Prostate gland (tissue), 2 donors: ENCODE measurements at regions of chr2 and their contacts with region 1.

Region 1: GRCh38 chr2:95345566-95346230 is 48.6 kb downstream of the KCNIP3 start:
- DNase-seq: peak; percentile 77
- H3K4me3 ChIP-seq: peak overlapping the region; percentile 44 to 57
- H3K27ac ChIP-seq: peak overlapping the region; percentile 60 to 77
- H3K4me1 ChIP-seq: peaks cover 2% of the 10 kb centered on the region
- H3K27me3 ChIP-seq: no peaks in the 10 kb centered on the region
- CTCF ChIP-seq: peak; percentile 43 to 92 (median 78)
- POLR2A ChIP-seq: no peak

Region 2: GRCh38 chr2:95179451-95179850 is 166.2 kb before region 1 on chr2:
- intact Hi-C with region 1: no loop called
- DNase-seq: no peak
- H3K4me3 ChIP-seq: no peak overlapping the region
- H3K27ac ChIP-seq: no peak overlapping the region
- H3K4me1 ChIP-seq: no peaks in the 10 kb centered on the region
- H3K27me3 ChIP-seq: no peaks in the 10 kb centered on the region
- CTCF ChIP-seq: no peak
- POLR2A ChIP-seq: no peak

Region 3: GRCh38 chr2:95207111-95207961 is 138.4 kb before region 1 on chr2 and contains the start of gene ZNF892:
- intact Hi-C with region 1: loop called (anchors 10 kb)
- DNase-seq: peak; percentile 92
- H3K4me3 ChIP-seq: peak within 1 kb of the TSS; percentile 53 to 56
- H3K27ac ChIP-seq: peak within 1 kb of the TSS; percentile 74 to 80
- H3K4me1 ChIP-seq: no peaks in the 10 kb centered on the region
- H3K27me3 ChIP-seq: no peaks in the 10 kb centered on the region
- CTCF ChIP-seq: peak in 3 of 4 experiments; percentile 38 to 57 (median 46)
- POLR2A ChIP-seq: peak; percentile 34
- total RNA-seq, gene ZNF892: 4.6 to 4.8 TPM

Region 4: DNA sequence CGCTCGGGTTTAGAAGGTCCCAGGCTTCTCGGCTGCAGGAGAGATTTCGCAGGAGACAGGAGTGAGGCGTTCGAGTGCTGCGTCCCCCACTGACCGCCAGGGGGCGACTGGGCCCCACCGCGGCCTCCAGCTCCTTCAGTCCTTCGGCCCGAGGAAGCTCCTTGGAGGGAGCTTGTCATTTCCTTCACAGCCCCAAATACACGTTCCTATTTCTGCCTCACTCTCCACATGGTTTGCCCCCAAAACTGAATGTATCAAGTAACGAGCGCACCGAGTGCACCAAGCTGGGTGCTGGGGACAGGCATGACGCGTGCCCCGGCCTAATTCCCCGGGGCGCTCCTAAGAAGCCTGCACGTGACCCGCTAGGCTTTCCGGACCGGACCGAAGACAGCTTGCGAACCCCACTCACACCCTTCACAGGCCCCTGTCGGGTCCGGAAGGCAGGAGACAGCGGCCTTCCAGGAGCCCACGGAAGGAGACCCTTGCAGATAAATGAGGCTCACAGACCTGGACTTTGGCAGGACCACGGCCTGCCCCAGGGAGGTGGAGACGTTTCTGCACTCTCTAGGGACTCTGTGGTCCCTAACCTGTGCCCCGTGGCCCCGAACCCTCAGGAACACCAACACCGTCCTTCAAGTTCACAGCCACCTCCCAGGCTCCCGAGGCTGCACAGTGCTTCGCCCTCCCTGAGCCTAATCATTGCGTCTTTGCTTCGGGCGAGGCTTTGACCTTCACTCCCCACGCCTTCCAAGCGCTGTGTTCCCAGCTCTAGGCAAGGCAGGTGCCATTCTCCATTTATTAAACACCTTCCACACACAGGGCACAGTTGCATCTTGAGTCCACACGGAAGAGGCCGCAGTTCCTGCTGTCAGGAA is 43.8 kb after region 1 on chr2:
- intact Hi-C with region 1: loop called (anchors 5 kb)
- DNase-seq: no peak
- H3K4me3 ChIP-seq: no peak overlapping the region
- H3K27ac ChIP-seq: no peak overlapping the region
- H3K4me1 ChIP-seq: no peaks in the 10 kb centered on the region
- H3K27me3 ChIP-seq: no peaks in the 10 kb centered on the region
- CTCF ChIP-seq: peak; percentile 40 to 77 (median 58)
- POLR2A ChIP-seq: no peak

Region 5: DNA sequence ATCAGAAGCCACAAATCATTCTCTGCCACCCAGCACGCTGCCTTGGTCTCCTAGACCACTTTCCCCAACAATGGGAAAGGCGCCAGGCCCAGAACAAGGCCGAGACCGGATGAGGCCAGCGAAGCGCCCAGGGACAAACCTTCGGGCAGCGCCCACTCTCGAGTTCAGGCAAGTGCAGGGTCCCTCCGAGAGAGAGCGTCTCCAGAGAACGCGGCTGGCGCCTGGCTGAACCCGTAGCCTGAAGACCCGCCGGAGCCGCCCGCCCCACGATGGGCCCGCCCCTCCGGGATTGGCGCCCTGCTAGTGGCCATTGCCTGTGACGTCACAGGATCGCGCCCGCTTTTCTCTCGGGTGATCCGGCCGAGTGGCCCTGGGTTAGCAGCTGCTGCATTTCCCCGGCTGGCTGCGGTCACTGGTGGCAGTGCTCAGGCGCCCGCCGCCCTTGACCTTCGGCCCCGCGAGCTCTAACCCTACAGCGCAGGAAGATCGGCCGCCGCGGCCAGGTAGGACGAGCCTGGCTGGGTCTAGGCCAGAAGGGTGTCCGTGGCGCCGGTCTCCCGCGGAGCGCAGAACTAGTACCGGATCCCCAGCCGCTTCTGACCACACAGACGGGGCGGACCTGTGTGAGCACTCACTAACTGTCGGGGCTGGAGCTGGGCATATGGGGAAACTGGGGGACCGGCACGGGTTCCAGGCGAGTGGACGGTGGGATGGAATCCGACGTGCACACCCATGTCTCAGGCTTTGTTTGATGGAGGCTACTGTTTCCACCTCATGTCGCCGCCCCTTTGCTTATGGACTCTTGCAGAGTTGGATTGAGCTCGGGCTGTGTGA is 56.9 kb after region 1 on chr2 and contains the start of gene FAHD2A:
- intact Hi-C with region 1: loop called (anchors 5 kb)
- DNase-seq: peak; percentile 95
- H3K4me3 ChIP-seq: peak within 1 kb of the TSS; percentile 62 to 69
- H3K27ac ChIP-seq: peak within 1 kb of the TSS; percentile 68 to 76
- H3K4me1 ChIP-seq: peaks cover 4% of the 10 kb centered on the region
- H3K27me3 ChIP-seq: no peaks in the 10 kb centered on the region
- CTCF ChIP-seq: peak in 1 of 4 experiments; percentile 15
- POLR2A ChIP-seq: peak; percentile 69
- total RNA-seq, gene FAHD2A: 15.3 to 27.9 TPM

Region 6: GRCh38 chr2:95728878-95729596 is 383.3 kb after region 1 on chr2:
- intact Hi-C with region 1: loop called (anchors 5 kb)
- DNase-seq: peak; percentile 72
- H3K4me3 ChIP-seq: no peak overlapping the region
- H3K27ac ChIP-seq: no peak overlapping the region
- H3K4me1 ChIP-seq: no peaks in the 10 kb centered on the region
- H3K27me3 ChIP-seq: no peaks in the 10 kb centered on the region
- CTCF ChIP-seq: peak; percentile 48 to 90 (median 79)
- POLR2A ChIP-seq: no peak